ENCODE measurements at regions of chr19 and their contacts with region 1.

Region 1: GRCh38 chr19:44954824-44955586 is at the start of gene CLPTM1:
- DNase-seq: peak; percentile 96
- H3K4me3 ChIP-seq: peak within 1 kb of the TSS; percentile 90 to 98 (median 93)
- H3K27ac ChIP-seq: peak within 1 kb of the TSS; percentile 94
- H3K4me1 ChIP-seq: peaks cover 16% of the 10 kb centered on the region
- H3K27me3 ChIP-seq: no peaks in the 10 kb centered on the region
- CTCF ChIP-seq: no peak
- total RNA-seq, gene CLPTM1: 36.5 to 89.7 TPM

Region 2: GRCh38 chr19:44512326-44513298 is 442.4 kb before region 1 on chr19:
- CTCF ChIA-PET with region 1: interaction called, 11 read pairs
- dilution Hi-C with region 1: no loop called
- in situ Hi-C with region 1: no loop called
- intact Hi-C with region 1: no loop called
- DNase-seq: peak; percentile 61
- H3K4me3 ChIP-seq: no peak overlapping the region
- H3K27ac ChIP-seq: no peak overlapping the region
- H3K4me1 ChIP-seq: no peaks in the 10 kb centered on the region
- H3K27me3 ChIP-seq: peaks cover 5% of the 10 kb centered on the region
- CTCF ChIP-seq: peak; percentile 69 to 89

Region 3: DNA sequence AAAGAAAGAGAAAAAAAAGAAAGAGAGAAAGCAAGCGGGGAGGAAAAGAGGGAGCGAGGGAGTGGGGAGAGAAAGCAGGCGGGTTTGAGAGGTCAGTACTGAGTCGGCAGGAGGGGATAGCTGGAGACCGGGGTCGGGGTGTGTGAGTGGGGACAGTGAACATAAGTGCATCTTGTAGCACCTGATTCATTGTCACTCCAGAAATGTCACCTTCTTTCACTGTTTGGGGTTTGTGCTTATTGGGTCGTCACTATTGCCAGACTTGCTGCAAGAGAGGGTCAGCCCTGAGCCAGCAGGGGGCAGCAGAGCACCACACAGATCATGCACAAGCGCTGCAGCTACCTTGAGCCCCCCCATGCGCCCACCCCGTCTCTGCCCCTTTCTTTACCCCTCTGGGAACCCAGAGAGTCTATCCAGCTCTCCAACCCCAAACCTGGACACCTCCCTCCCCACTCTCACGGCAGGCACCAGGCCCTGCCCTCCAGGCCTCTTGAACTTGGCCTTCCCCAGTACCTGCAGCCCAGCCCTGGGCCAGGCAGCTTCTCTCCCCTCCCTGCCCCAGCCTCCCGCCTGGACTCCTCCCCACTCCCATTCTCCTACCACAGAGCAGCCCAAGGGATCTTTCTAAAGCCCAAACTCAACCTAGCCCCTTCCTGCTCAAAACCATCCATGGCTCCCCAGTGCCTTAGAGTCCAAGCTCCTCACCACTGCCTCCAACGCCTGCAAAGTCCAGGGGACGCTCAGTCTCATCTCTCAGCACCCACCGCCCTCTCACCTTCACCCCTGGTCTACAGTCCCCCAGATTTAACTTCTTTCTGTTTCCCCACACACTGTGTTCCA is 265.7 kb before region 1 on chr19:
- CTCF ChIA-PET with region 1: no interaction called
- dilution Hi-C with region 1: no loop called
- in situ Hi-C with region 1: no loop called
- intact Hi-C with region 1: loop called (anchors 1 kb)
- DNase-seq: no peak
- H3K4me3 ChIP-seq: no peak overlapping the region
- H3K27ac ChIP-seq: no peak overlapping the region
- H3K4me1 ChIP-seq: peaks cover 23% of the 10 kb centered on the region
- H3K27me3 ChIP-seq: no peaks in the 10 kb centered on the region
- CTCF ChIP-seq: peak; percentile 87 to 94

Region 4: DNA sequence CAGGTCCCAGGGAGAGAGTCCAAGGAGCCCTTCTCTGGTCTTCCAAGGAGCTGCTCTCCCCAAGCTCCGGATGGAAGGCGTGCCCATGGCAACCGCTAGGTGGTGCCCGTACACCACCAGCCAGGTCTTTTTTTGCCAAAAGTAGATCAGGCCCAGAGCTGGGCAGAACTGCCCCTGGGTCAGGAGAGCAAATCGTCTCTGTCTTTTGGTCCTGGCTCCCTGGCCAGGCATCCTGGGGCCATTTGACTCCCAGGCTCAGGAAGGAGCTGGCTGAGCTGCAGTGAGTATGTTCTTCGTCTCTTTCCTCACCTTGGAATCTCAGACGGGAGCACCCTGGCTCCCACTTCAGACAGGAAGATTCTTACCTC is 231.1 kb before region 1 on chr19:
- CTCF ChIA-PET with region 1: interaction called, 3 read pairs
- dilution Hi-C with region 1: loop called (anchors 10 kb)
- in situ Hi-C with region 1: no loop called
- intact Hi-C with region 1: loop called (anchors 1 kb)
- DNase-seq: peak; percentile 70
- H3K4me3 ChIP-seq: no peak overlapping the region
- H3K27ac ChIP-seq: no peak overlapping the region
- H3K4me1 ChIP-seq: peaks cover 11% of the 10 kb centered on the region
- H3K27me3 ChIP-seq: no peaks in the 10 kb centered on the region
- CTCF ChIP-seq: peak; percentile 97 to 99

Region 5: GRCh38 chr19:44789943-44790483 is 165.0 kb before region 1 on chr19:
- CTCF ChIA-PET with region 1: no interaction called
- dilution Hi-C with region 1: loop called (anchors 5 kb)
- in situ Hi-C with region 1: no loop called
- intact Hi-C with region 1: no loop called
- DNase-seq: no peak
- H3K4me3 ChIP-seq: no peak overlapping the region
- H3K27ac ChIP-seq: no peak overlapping the region
- H3K4me1 ChIP-seq: no peaks in the 10 kb centered on the region
- H3K27me3 ChIP-seq: no peaks in the 10 kb centered on the region
- CTCF ChIP-seq: no peak

Region 6: GRCh38 chr19:44903602-44904425 is 51.2 kb before region 1 on chr19:
- CTCF ChIA-PET with region 1: no interaction called
- dilution Hi-C with region 1: no loop called
- in situ Hi-C with region 1: loop called in 1 of 2 experiments (anchors 5 kb)
- intact Hi-C with region 1: loop called (anchors 1 kb)
- DNase-seq: no peak
- H3K4me3 ChIP-seq: no peak overlapping the region
- H3K27ac ChIP-seq: no peak overlapping the region
- H3K4me1 ChIP-seq: peaks cover 4% of the 10 kb centered on the region
- H3K27me3 ChIP-seq: no peaks in the 10 kb centered on the region
- CTCF ChIP-seq: peak; percentile 94 to 98

Region 7: GRCh38 chr19:45038931-45039893 is 84.2 kb after region 1 on chr19 and contains the start of gene CLASRP:
- CTCF ChIA-PET with region 1: no interaction called
- dilution Hi-C with region 1: loop called (anchors 5 kb)
- in situ Hi-C with region 1: no loop called
- intact Hi-C with region 1: no loop called
- DNase-seq: peak; percentile 83
- H3K4me3 ChIP-seq: peak within 1 kb of the TSS; percentile 80 to 99 (median 98)
- H3K27ac ChIP-seq: peak within 1 kb of the TSS; percentile 92
- H3K4me1 ChIP-seq: peaks cover 11% of the 10 kb centered on the region
- H3K27me3 ChIP-seq: no peaks in the 10 kb centered on the region
- CTCF ChIP-seq: no peak
- total RNA-seq, gene CLASRP: 19.5 to 69.5 TPM

Region 8: DNA sequence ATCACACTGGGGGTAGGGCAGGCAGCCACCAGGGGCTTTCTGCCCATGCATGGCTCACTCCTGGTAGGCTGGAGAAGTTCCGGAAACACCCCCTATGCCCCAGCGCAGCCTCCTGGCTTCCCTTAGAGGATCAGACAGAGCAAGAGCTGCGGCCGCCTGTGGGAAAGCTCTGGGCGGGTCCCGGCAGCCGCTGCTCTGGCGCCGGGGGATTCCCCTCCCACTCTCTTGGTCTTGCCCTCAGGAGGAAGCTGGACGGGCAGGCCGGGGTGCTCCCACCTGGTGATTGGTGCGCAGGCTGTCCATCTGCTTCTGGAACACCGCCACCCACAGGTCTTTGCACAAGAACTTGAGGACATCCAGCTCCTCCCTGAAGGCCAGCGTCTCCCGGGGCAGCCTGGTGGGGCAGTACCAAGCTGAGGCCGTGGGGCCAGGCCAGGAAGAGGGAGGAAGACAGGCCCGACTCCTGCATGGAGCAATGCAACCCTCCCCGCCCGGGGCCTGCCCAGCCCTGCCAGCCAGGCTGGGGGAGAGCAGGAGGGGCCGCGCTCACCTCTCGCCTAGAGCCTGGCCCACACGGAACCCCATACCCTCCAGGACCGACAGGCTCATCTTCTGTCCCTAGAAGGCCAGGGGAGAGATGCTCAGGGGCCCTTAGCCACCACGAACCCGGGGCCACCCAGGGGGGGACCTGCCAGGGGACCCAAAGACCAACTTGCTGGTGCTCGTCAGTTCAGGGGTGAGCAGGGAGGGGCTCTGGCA is 209.8 kb after region 1 on chr19:
- CTCF ChIA-PET with region 1: no interaction called
- dilution Hi-C with region 1: no loop called
- in situ Hi-C with region 1: no loop called
- intact Hi-C with region 1: no loop called
- DNase-seq: peak; percentile 90
- H3K4me3 ChIP-seq: no peak overlapping the region
- H3K27ac ChIP-seq: no peak overlapping the region
- H3K4me1 ChIP-seq: peaks cover 55% of the 10 kb centered on the region
- H3K27me3 ChIP-seq: no peaks in the 10 kb centered on the region
- CTCF ChIP-seq: peak in 1 of 2 donors; percentile 33

Measured in mammary epithelial cell (primary cell).